IMR-90 (cell line): ENCODE measurements at regions of chr19 and their contacts with region 1.

Region 1: DNA sequence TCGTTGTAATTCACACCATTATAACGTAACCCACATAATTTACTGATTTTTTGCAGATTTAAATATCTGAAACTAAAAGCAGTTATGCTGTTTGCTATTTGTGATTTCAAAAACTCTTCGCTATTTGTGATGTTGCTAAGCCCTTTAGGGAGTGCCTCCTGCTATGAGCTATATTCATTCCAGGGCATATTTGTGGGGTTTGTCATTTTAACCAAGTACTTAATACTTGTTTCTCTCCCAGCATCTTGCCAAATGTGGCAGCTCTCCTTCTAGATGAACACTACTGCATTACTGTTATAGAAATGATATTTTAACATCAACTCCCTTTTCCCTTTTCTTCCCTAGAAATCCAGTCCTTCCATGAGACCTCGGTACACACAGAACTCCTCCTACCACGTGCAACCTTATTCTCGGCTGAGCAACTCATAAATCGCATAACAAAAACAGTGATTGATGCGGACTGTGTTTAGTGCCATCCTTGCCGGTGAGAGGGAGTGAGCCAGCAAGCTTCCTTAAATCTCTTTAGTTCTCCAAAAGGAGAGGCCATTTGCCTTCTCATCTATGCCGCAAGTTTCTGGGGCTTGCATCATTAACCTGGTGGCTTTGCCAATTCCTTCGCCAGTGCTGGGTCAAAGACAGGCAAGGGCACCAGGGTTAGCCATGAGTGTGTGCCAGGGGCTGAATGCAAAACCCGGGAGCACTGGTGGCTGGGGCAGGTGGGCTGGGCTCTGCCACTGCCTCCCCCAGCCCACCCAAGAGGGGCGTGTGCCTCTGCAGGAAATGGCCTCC is 33.4 kb downstream of the RFX2 start:
- DNase-seq: peak; percentile 91
- ATAC-seq: peak; percentile 94
- H3K4me3 ChIP-seq: no peak overlapping the region
- H3K27ac ChIP-seq: peak overlapping the region; percentile 99
- H3K4me1 ChIP-seq: peaks cover 15% of the 10 kb centered on the region
- H3K27me3 ChIP-seq: no peaks in the 10 kb centered on the region
- CTCF ChIP-seq: no peak
- POLR2A ChIP-seq: no peak
- RAD21 ChIP-seq: no peak

Region 2: DNA sequence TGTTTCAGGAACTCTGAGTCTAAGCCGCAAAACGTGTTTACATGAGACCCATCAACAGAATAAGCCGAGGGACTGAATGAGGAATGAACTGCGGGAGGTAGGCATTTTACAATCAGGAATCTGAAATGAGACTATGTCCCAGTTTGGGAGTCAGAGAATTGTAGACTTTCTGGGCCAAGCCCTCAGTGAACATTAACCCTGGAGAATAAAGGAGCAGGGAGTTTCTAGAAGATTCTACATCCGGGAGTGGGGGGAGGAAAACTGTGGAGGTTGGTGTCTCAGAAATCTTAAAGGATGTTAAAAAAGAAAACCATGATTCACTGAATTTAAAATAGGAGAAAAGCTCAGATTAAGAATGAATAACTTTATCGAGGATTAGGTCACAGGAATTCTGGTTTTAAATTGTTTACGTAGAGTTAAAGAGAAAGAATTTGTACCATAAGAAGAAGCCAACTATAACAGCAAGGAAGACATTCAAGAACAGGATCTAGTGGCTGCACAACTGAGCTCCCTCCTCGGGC is 15.0 kb after region 1 on chr19:
- CTCF ChIA-PET with region 1: interaction called, 3 read pairs
- POLR2A ChIA-PET with region 1: interaction called, 4 read pairs
- dilution Hi-C with region 1: no loop called
- in situ Hi-C with region 1: no loop called
- intact Hi-C with region 1: loop called (anchors 2 kb)
- DNase-seq: peak; percentile 69
- ATAC-seq: peak; percentile 75
- H3K4me3 ChIP-seq: peak overlapping the region; percentile 34
- H3K27ac ChIP-seq: peak overlapping the region; percentile 77
- H3K4me1 ChIP-seq: peaks cover 28% of the 10 kb centered on the region
- H3K27me3 ChIP-seq: no peaks in the 10 kb centered on the region
- CTCF ChIP-seq: no peak
- POLR2A ChIP-seq: no peak
- RAD21 ChIP-seq: no peak

Region 3: GRCh38 chr19:6125571-6125989 is 48.7 kb after region 1 on chr19:
- CTCF ChIA-PET with region 1: no interaction called
- POLR2A ChIA-PET with region 1: no interaction called
- dilution Hi-C with region 1: no loop called
- in situ Hi-C with region 1: no loop called
- intact Hi-C with region 1: no loop called
- DNase-seq: peak; percentile 77
- ATAC-seq: peak; percentile 78
- H3K4me3 ChIP-seq: no peak overlapping the region
- H3K27ac ChIP-seq: no peak overlapping the region
- H3K4me1 ChIP-seq: no peaks in the 10 kb centered on the region
- H3K27me3 ChIP-seq: no peaks in the 10 kb centered on the region
- CTCF ChIP-seq: peak; percentile 88
- POLR2A ChIP-seq: no peak
- RAD21 ChIP-seq: peak; percentile 98